ENCODE measurements at regions of chr2 and their contacts with region 1.

Region 1: DNA sequence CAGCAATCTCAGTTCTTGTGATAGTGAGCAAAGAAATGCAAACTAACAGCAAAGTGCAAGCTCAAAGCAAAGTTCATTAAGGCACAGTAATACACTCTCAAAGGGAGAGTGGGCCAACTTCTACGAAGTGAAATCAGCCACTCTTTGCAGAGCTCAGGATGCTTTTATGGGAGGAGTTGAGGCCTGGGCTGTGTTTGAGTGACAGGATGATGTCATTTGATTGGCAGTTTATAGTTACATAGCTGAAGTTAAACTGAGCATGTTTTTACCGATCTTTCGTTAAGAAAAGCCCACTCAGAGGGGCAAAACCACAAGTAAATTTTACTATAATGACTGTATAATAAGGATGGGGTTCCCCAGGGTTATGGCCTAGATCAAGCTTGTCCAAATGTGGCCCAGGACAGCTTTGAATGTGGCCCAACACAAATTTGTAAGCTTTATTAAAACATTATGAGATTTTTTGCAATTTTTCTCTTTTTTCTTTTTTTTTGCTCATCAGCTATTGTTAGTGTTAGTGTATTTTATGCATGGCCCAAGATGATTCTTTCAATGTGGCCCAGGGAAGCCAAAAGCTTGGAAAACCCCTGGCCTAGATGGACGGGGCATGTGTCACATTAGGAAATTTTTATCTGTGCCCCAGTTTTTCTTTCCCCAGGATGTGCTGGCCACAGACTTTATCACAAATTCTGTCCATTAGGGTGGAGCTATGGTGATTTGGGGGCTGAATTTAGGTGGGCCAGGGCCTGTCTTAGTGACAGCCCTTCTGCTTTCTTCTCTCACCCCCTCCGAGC is 8.3 kb upstream of the DNAH7 start:
- DNase-seq: no peak
- H3K4me3 ChIP-seq: no peak overlapping the region
- H3K27ac ChIP-seq: peak overlapping the region in 2 of 3 donors; percentile 15 to 47
- H3K4me1 ChIP-seq: peaks cover 3 to 7% of the 10 kb centered on the region in 2 donors
- H3K27me3 ChIP-seq: no peaks in the 10 kb centered on the region
- CTCF ChIP-seq: no peak
- POLR2A ChIP-seq: no peak

Region 2: GRCh38 chr2:196277002-196277401 is 200.0 kb after region 1 on chr2:
- intact Hi-C with region 1: loop called (anchors 10 kb)
- DNase-seq: no peak
- H3K4me3 ChIP-seq: no peak overlapping the region
- H3K27ac ChIP-seq: no peak overlapping the region
- H3K4me1 ChIP-seq: peaks cover 15 to 20% of the 10 kb centered on the region in 2 donors
- H3K27me3 ChIP-seq: no peaks in the 10 kb centered on the region
- CTCF ChIP-seq: peak in 4 of 6 experiments; percentile 20 to 36 (median 26)
- POLR2A ChIP-seq: no peak

Region 3: DNA sequence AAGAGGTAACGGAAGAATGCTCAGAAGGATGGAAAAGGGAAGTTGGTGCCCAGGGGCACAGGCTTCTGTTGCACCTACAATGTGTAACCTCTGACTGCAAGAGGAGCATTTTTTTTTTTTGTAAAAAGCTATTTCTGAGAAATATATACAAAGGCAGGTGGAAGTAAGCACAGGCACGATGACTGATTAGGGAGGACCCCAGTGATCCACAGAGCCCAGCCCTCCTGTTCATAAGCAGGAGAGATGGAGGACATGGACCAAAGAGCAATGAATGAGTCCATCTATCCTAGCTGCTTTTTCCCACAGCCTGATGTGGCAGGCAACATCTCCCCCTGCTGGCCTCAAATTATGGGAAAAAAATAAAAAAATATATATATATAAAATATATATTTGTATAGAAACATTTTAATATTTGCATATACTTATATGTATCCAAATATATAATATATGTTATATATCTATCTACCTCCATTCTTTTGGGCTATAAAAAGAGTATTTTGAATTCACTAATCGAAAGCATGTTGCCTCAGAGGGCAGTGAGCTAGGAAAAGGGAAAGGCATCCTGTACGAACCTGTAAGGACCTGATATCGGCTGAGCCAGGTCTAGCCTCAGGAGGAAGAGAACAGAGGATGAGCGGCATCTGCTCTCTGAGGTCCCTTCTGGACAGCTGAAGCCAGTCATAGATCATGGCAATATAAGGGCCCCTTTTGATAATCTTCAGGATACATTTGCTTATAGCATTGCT is 260.4 kb after region 1 on chr2:
- intact Hi-C with region 1: loop called (anchors 5 kb)
- DNase-seq: no peak
- H3K4me3 ChIP-seq: no peak overlapping the region
- H3K27ac ChIP-seq: no peak overlapping the region
- H3K4me1 ChIP-seq: no peaks in the 10 kb centered on the region
- H3K27me3 ChIP-seq: no peaks in the 10 kb centered on the region
- CTCF ChIP-seq: peak in 4 of 6 experiments; percentile 15 to 50 (median 24)
- POLR2A ChIP-seq: no peak